B cell (primary cell): ENCODE measurements at regions of chr12 and their contacts with region 1.

Region 1: DNA sequence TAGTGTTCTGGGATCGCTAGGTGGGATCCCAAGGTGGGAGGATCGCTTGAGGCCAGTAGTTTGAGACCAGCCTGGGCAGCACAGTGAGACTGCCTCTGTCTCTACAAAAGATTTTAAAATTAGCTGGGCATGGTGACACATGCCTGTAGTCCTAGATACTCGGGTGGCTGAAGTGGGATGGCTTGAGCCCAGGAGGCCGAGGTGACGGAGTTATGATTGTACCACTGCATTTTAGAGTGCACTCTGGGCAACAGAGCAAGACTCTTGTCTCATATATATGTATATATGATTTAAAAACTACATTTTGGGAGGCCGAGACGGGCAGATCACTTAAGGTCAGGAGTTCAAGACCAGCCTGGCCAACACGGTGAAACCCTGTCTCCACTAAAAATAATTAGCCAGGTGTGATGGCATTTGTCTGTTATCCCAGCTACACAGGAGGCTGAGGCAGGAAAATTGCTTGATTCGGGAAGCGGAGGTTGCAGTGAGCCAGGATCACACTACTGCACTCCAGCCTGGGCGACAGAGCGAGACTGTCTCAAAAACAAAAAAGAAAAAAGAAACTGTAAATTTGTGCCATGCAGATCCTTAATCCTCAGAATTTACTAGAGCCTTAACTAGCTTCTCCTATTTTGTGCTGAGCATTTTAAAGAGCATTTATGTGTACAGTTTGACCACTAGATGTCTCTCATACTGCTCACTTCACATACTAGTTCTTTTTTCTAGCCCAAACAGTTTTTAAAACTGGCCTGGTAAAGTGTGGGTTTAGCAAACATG is 114.8 kb downstream of the MON2 start:
- DNase-seq: peak; percentile 63
- ATAC-seq: peak; percentile 33
- H3K4me3 ChIP-seq: no peak overlapping the region
- H3K4me3 Mint-ChIP-seq: no peak overlapping the region
- H3K27ac ChIP-seq: no peak overlapping the region
- H3K27ac Mint-ChIP-seq: no peak overlapping the region
- H3K4me1 ChIP-seq: no peaks in the 10 kb centered on the region
- H3K4me1 Mint-ChIP-seq: no peaks in the 10 kb centered on the region
- H3K27me3 ChIP-seq: no peaks in the 10 kb centered on the region
- H3K27me3 Mint-ChIP-seq: no peaks in the 10 kb centered on the region
- CTCF ChIP-seq: peak; percentile 82

Region 2: GRCh38 chr12:62640910-62641448 is 59.5 kb after region 1 on chr12:
- CTCF ChIA-PET with region 1: no interaction called
- POLR2A ChIA-PET with region 1: no interaction called
- intact Hi-C with region 1: no loop called
- DNase-seq: no peak
- ATAC-seq: no peak
- H3K4me3 ChIP-seq: no peak overlapping the region
- H3K4me3 Mint-ChIP-seq: no peak overlapping the region
- H3K27ac ChIP-seq: no peak overlapping the region
- H3K27ac Mint-ChIP-seq: no peak overlapping the region
- H3K4me1 ChIP-seq: no peaks in the 10 kb centered on the region
- H3K4me1 Mint-ChIP-seq: peaks cover 5% of the 10 kb centered on the region
- H3K27me3 ChIP-seq: peaks cover 0 to 4% (median 0%) of the 10 kb centered on the region in 4 experiments
- H3K27me3 Mint-ChIP-seq: peaks cover 16% of the 10 kb centered on the region
- CTCF ChIP-seq: no peak

Region 3: GRCh38 chr12:62785941-62786559 is 204.6 kb after region 1 on chr12:
- CTCF ChIA-PET with region 1: interaction called, 62 read pairs
- POLR2A ChIA-PET with region 1: no interaction called
- intact Hi-C with region 1: no loop called
- DNase-seq: no peak
- ATAC-seq: no peak
- H3K4me3 ChIP-seq: no peak overlapping the region
- H3K4me3 Mint-ChIP-seq: no peak overlapping the region
- H3K27ac ChIP-seq: no peak overlapping the region
- H3K27ac Mint-ChIP-seq: no peak overlapping the region
- H3K4me1 ChIP-seq: no peaks in the 10 kb centered on the region
- H3K4me1 Mint-ChIP-seq: no peaks in the 10 kb centered on the region
- H3K27me3 ChIP-seq: no peaks in the 10 kb centered on the region
- H3K27me3 Mint-ChIP-seq: no peaks in the 10 kb centered on the region
- CTCF ChIP-seq: no peak

Region 4: GRCh38 chr12:62793256-62794217 is 212.1 kb after region 1 on chr12:
- CTCF ChIA-PET with region 1: interaction called, 349 read pairs
- POLR2A ChIA-PET with region 1: no interaction called
- intact Hi-C with region 1: loop called (anchors 1 kb)
- DNase-seq: peak; percentile 80
- ATAC-seq: peak; percentile 70
- H3K4me3 ChIP-seq: no peak overlapping the region
- H3K4me3 Mint-ChIP-seq: no peak overlapping the region
- H3K27ac ChIP-seq: no peak overlapping the region
- H3K27ac Mint-ChIP-seq: no peak overlapping the region
- H3K4me1 ChIP-seq: no peaks in the 10 kb centered on the region
- H3K4me1 Mint-ChIP-seq: no peaks in the 10 kb centered on the region
- H3K27me3 ChIP-seq: no peaks in the 10 kb centered on the region
- H3K27me3 Mint-ChIP-seq: no peaks in the 10 kb centered on the region
- CTCF ChIP-seq: peak; percentile 97

Region 5: DNA sequence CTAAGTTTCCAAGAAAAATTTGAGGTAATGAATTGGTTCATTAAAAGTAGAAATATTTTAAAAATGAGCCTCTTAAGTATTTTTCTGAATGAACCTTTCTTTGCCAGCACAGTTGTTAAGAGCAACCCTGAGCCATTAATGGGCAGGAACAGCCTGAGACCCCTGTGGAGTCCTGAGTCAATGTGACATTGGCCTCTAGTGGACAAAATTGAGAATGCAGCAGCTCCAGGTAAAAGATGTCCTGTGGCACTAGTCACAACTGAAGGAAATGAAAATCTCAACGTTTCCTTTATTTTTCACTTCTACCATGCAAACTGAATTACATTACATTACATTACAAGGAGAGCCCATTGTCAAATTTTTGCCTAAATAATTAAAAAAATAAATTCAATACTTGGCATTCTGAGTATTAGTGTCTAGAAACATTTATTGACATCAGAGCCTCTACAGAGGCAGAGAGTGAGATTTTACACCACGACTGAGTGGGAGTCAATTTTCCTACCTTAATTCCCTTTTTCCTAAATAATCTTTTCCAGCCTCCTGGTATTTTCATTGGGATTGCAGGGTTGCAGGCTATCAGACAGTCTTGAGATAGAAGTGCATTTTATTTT is 217.8 kb after region 1 on chr12:
- CTCF ChIA-PET with region 1: interaction called, 349 read pairs
- POLR2A ChIA-PET with region 1: no interaction called
- intact Hi-C with region 1: loop called (anchors 1 kb)
- DNase-seq: peak; percentile 68
- ATAC-seq: peak; percentile 80
- H3K4me3 ChIP-seq: no peak overlapping the region
- H3K4me3 Mint-ChIP-seq: no peak overlapping the region
- H3K27ac ChIP-seq: no peak overlapping the region
- H3K27ac Mint-ChIP-seq: no peak overlapping the region
- H3K4me1 ChIP-seq: no peaks in the 10 kb centered on the region
- H3K4me1 Mint-ChIP-seq: no peaks in the 10 kb centered on the region
- H3K27me3 ChIP-seq: no peaks in the 10 kb centered on the region
- H3K27me3 Mint-ChIP-seq: no peaks in the 10 kb centered on the region
- CTCF ChIP-seq: peak; percentile 98

Region 6: DNA sequence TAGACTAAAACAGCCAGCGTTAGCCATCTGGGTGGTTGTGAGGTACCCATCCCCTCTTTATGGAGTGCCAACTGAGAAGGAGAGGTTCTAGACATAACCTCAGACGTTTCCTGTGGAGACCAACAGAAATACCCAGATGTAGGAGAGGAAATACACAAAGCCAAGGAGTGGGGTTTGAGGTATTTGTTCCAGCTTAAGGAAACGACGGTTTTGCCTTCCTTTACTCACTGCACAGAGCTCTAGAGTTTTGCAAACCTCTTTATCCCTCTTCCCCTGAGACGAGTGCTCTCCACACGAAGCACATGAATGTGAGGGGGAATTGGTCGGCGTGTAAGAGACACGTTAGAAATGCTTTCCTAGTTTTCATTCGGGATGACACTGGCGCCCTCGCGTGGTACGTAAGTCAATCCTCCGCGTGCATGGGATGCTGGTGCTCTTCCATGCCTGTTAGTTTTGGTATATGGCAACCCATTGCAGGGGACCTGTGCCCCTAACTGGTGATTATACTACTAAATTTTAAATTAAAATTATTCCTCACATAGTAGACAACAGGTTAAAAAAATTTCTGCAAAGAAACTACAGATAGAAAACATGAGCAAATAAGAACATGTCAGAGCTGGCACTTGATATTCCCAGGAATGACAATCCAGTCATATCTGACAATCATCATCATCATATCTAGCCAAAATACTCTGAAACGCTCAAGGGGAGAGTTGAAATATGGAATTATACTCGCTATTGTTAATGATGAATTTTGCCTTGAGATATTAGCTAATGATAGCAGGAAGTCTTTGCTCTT is 231.8 kb after region 1 on chr12:
- CTCF ChIA-PET with region 1: interaction called, 17 read pairs
- POLR2A ChIA-PET with region 1: no interaction called
- intact Hi-C with region 1: no loop called
- DNase-seq: peak; percentile 49
- ATAC-seq: no peak
- H3K4me3 ChIP-seq: peak overlapping the region in 3 of 5 experiments; percentile 3 to 30 (median 29)
- H3K4me3 Mint-ChIP-seq: peak overlapping the region; percentile 70
- H3K27ac ChIP-seq: no peak overlapping the region
- H3K27ac Mint-ChIP-seq: no peak overlapping the region
- H3K4me1 ChIP-seq: peaks cover 6 to 7% of the 10 kb centered on the region in 2 donors
- H3K4me1 Mint-ChIP-seq: peaks cover 7% of the 10 kb centered on the region
- H3K27me3 ChIP-seq: peaks cover 0 to 8% (median 0%) of the 10 kb centered on the region in 4 experiments
- H3K27me3 Mint-ChIP-seq: peaks cover 14% of the 10 kb centered on the region
- CTCF ChIP-seq: peak; percentile 65

Region 7: GRCh38 chr12:63086149-63086915 is 504.9 kb after region 1 on chr12:
- CTCF ChIA-PET with region 1: no interaction called
- POLR2A ChIA-PET with region 1: no interaction called
- intact Hi-C with region 1: no loop called
- DNase-seq: no peak
- ATAC-seq: no peak
- H3K4me3 ChIP-seq: no peak overlapping the region
- H3K4me3 Mint-ChIP-seq: no peak overlapping the region
- H3K27ac ChIP-seq: no peak overlapping the region
- H3K27ac Mint-ChIP-seq: no peak overlapping the region
- H3K4me1 ChIP-seq: no peaks in the 10 kb centered on the region
- H3K4me1 Mint-ChIP-seq: no peaks in the 10 kb centered on the region
- H3K27me3 ChIP-seq: peaks cover 0 to 3% (median 1%) of the 10 kb centered on the region in 4 experiments
- H3K27me3 Mint-ChIP-seq: peaks cover 8% of the 10 kb centered on the region
- CTCF ChIP-seq: no peak